Activated CD4-positive, alpha-beta T cell treated with anti-CD3 and anti-CD28 coated beads for 36 hours (primary cell): ENCODE measurements at regions of chr20 and their contacts with region 1.

Region 1: GRCh38 chr20:41136680-41137613 is at the start of gene PLCG1:
- DNase-seq: peak; percentile 93
- ATAC-seq: peak; percentile 62
- H3K4me3 Mint-ChIP-seq: peak within 1 kb of the TSS; percentile 86
- H3K27ac Mint-ChIP-seq: peak within 1 kb of the TSS; percentile 92
- H3K4me1 Mint-ChIP-seq: peaks cover 65% of the 10 kb centered on the region
- H3K27me3 Mint-ChIP-seq: no peaks in the 10 kb centered on the region
- total RNA-seq, gene PLCG1: 185 to 230 TPM

Region 2: GRCh38 chr20:41150664-41151063 is 13.7 kb after region 1 on chr20:
- CTCF ChIA-PET with region 1: interaction called, 31 read pairs
- POLR2A ChIA-PET with region 1: interaction called, 19 read pairs
- intact Hi-C with region 1: no loop called
- DNase-seq: no peak
- ATAC-seq: peak; percentile 45
- H3K4me3 Mint-ChIP-seq: peak overlapping the region; percentile 3
- H3K27ac Mint-ChIP-seq: peak overlapping the region; percentile 93
- H3K4me1 Mint-ChIP-seq: peaks cover 91% of the 10 kb centered on the region
- H3K27me3 Mint-ChIP-seq: no peaks in the 10 kb centered on the region

Region 3: GRCh38 chr20:41173161-41173721 is 36.3 kb after region 1 on chr20:
- CTCF ChIA-PET with region 1: interaction called, 13 read pairs
- POLR2A ChIA-PET with region 1: no interaction called
- intact Hi-C with region 1: loop called in 1 of 2 experiments (anchors 5 kb)
- DNase-seq: peak; percentile 78
- ATAC-seq: peak; percentile 78
- H3K4me3 Mint-ChIP-seq: no peak overlapping the region
- H3K27ac Mint-ChIP-seq: peak overlapping the region; percentile 65
- H3K4me1 Mint-ChIP-seq: peaks cover 6% of the 10 kb centered on the region
- H3K27me3 Mint-ChIP-seq: no peaks in the 10 kb centered on the region

Region 4: DNA sequence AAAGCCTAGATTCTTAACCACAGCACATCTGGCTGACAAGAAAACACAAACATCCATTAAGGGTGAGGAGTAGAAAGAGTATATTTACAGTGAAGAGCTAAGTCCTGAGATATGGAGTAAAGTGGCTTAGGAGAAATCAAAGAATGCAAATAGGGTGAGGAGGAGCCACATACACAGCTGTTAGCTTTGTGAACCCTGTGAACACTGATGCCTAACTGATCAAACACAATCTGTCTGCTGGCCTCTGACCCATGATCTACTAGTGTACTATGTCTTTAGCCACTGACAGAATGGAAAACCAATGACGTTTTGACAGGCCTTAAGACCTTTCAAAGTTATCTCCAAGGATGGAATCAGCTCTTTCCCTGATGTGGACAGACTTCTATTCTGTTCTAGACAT is 105.4 kb after region 1 on chr20:
- CTCF ChIA-PET with region 1: no interaction called
- POLR2A ChIA-PET with region 1: interaction called, 11 read pairs
- intact Hi-C with region 1: no loop called
- DNase-seq: no peak
- ATAC-seq: no peak
- H3K4me3 Mint-ChIP-seq: no peak overlapping the region
- H3K27ac Mint-ChIP-seq: no peak overlapping the region
- H3K4me1 Mint-ChIP-seq: peaks cover 12% of the 10 kb centered on the region
- H3K27me3 Mint-ChIP-seq: no peaks in the 10 kb centered on the region

Region 5: DNA sequence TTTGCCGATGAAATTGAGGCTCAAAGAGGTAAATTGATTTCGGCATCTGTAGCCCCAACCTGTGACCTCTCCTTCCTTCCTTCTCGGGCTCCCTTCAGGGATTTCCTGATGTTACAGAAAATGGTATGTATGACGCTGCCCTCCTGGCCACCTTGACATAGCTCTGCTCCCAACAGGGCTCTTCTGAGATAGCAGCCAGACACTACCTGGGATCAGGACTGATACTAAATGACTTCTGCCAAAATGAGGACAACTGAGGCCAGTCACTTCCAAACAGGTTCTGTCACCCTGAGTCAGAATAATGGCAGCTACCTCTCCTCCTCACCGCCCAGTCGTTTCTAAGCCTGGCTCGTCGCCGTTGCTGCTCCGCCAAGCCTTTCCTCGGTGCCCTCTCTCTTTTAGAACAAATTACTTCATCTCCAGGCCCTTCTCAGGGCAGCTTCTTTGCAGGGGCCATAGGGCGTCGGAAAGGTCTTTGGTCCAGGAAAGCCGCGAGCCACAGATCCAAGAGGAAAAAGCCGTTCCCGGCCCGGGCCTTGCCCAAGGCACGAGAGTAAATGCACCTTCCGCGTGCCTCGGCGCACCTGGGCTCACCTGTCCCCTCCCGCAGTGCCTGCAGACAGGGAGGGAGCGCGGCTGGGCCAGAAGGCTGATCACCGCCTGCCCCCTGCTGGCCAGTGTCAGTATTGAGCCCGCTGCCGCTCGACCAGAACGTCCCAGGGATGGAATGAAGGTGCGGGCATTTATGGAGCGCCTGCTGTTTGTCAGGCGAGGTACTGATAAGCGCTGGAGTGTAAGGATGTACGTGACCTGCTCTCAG is 202.8 kb after region 1 on chr20:
- CTCF ChIA-PET with region 1: interaction called, 20 read pairs
- POLR2A ChIA-PET with region 1: no interaction called
- intact Hi-C with region 1: loop called (anchors 1 kb)
- DNase-seq: peak; percentile 92
- ATAC-seq: peak; percentile 76
- H3K4me3 Mint-ChIP-seq: peak overlapping the region; percentile 68
- H3K27ac Mint-ChIP-seq: peak overlapping the region; percentile 27
- H3K4me1 Mint-ChIP-seq: peaks cover 7% of the 10 kb centered on the region
- H3K27me3 Mint-ChIP-seq: peaks cover 2% of the 10 kb centered on the region

Region 6: DNA sequence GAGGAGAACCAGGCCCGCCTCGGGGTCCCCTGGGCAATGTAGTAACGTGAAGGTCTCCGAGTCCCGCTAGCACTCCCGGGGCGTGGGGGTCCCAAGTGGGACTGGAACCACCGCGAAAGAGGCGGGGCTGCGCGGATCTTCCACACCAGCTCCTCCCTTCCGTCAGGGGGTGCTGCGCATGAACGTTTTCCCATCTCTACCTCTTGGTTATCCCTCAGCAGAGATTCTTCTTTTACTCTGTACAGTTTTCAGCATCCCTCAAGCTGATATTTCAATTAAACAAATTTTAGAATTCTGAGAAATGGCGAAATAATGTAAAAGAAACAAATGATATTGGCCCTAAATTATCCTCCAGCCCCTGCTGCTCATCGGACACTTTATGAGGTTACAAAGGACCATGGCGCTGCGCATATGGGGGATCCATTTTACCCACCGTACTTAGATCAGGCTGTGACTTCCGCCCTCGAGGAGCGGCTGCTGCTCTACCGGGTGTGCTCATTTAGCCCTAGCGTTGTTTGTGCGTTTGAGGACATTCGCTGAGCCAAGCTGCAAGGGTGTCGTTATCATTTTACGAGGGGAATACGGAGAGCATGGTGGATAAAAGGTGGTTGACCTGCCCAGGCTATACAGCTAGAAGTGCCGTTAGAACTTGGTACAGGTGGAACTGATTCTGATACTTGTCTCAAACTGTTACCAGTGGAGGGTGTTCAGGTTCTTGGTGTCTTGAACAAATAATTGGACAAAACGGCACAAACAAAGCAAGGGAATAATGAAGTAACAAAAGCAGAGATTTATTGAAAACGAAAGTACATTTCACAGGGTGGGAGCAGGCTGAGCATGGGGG is 556.4 kb after region 1 on chr20:
- CTCF ChIA-PET with region 1: no interaction called
- POLR2A ChIA-PET with region 1: no interaction called
- intact Hi-C with region 1: loop called in 1 of 2 experiments (anchors 1 kb)
- DNase-seq: peak; percentile 88
- ATAC-seq: peak; percentile 90
- H3K4me3 Mint-ChIP-seq: peak overlapping the region; percentile 90
- H3K27ac Mint-ChIP-seq: peak overlapping the region; percentile 94
- H3K4me1 Mint-ChIP-seq: peaks cover 13% of the 10 kb centered on the region
- H3K27me3 Mint-ChIP-seq: peaks cover 2% of the 10 kb centered on the region